Left ventricle myocardium superior (tissue), 1 donor: ENCODE measurements at regions of chr12 and their contacts with region 1.

Region 1: DNA sequence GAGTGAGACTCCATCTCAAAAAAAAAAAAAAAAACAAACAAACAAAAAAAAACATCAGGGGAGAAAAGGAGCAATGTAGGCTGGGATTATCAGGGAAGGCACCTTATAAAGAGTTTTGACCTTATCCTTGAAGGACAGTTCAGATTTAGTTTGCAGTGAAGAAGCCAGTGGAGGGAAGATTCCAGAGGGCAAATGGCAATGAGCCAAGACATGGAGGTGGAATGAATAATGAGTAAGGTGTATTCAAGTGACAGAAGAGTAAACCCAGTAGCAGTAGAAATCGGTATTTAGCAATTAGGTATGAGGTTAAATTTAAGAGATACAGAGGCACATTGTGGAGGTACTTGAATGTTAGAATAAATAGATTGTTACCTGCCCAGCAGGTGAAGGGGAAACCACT is 2.2 kb upstream of the DUSP16 start:
- DNase-seq: no peak
- ATAC-seq: no peak

Region 2: DNA sequence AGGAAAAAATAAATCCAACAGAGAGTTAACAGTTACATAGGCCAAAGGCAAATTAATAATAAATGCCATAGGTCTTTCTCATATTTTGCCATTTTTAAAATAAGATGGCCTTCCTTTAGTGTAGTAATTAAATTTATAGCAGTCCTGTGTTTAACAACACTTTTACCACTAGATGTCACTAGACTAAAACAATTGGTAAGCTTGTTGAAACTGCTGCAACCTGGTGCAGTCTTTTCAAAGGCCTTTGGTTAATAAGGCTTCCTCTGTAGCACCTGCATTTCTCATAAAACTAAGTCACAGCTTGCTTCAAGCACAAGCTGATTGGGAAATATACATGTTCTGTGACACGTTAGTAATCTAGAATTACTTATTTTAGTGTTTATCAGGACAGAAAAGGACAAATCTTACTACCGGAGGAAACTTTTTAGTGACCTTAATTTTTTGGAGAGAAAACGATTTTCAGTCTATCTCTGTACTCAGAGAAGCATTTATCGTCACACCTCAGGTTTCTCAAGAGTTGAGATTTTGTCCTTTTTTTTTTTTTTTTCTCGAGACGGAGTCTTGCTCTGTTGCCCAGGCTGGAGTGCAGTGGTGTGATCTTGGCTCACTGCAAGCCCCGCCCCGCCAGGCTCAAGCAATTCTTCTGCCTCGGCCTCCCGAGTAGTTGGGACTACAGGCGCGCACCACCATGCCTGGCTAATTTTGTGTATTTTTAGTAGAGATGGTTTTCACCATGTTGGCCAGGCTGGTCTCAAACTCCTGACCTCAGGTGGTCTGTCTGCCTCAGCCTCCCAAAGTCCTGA is 188.1 kb before region 1 on chr12:
- intact Hi-C with region 1: loop called (anchors 2 kb)
- DNase-seq: no peak
- ATAC-seq: peak; percentile 86

Region 3: DNA sequence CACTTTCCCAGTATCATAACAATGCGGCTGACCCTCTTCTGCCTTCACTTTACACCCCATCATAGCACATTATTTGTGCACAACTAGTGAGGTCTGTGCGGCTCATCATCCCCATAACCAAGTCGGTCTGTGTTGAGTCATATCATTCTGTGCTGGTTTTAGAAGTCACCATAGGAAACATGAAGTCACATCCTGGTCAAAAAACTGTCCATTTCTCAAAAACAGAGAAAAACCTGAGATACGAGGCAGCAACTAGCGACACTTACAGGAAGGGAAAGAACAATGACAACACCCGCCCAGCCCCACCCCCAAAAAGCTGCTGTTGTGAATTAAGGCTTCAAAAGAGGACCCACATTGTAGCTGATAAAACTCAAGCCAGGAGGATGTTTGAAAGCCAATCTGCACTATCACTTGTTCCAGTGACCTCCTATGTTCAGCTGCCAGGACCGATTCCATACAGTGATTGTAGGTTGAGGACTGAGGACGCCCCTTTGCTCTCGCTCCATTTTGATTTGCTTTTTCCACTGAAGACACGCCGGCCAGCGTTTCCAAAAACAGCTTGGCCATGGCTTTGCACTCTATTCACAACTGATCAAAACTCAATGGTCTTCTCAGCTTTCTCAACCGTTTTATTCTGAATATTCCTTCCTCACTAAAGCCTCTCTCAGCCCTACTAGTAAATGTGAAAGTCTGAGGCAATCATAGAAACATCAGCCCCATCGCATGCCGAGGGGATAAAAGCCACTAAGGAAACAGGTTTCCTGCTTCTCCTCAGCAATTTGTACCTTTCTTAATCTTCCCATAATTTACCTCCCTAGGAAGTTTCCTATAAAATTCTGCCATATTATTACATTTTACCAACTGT is 89.7 kb before region 1 on chr12:
- intact Hi-C with region 1: no loop called
- DNase-seq: no peak
- ATAC-seq: peak; percentile 43